ENCODE measurements at regions of chr15 and their contacts with region 1.

Region 1: DNA sequence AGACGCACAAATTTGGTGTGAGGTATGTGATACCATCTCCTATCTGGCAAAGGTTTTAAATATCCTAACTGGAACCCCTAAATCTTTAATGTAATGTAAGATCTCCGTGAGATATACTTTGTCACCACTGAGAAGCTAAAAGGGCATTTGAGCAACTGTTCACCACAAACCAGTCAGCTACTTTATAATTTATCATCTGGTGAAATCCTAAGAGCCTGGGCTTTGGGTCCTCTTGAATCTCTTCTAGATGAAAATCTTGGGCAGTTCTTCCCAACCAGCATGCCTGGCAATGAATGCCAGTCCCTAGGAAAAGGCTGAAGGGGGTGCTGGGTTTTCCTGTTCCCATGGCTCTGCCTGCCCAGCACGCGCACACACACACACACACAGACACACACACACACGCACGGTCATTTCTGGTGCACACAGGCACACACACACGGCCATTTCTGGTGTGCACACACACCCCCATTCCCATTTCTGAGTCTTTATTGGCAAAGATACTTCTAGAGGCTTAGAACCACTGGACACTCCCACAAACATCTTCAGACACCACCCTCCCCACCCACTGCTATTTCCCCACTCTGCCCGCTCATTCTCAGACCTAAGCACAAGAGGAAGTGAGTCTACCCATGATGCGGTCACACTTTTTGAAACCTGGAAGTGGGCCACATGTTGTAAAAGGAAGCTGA is 72.6 kb downstream of the MYO1E start:
- DNase-seq: peak; percentile 97
- ATAC-seq: peak; percentile 77
- H3K4me3 ChIP-seq: peak overlapping the region; percentile 8; the same call in 1 of the 2 replicates
- H3K27ac ChIP-seq: peak overlapping the region; percentile 96
- H3K4me1 ChIP-seq: peaks cover 82% of the 10 kb centered on the region
- H3K27me3 ChIP-seq: no peaks in the 10 kb centered on the region
- CTCF ChIP-seq: no peak
- EP300 ChIP-seq: peak; percentile 62 to 87; a peak in 3 of 4 replicates
- POLR2A ChIP-seq: no peak
- RAD21 ChIP-seq: 0 out of 2 replicates have a peak, but pooled peaks have one; percentile 16

Region 2: DNA sequence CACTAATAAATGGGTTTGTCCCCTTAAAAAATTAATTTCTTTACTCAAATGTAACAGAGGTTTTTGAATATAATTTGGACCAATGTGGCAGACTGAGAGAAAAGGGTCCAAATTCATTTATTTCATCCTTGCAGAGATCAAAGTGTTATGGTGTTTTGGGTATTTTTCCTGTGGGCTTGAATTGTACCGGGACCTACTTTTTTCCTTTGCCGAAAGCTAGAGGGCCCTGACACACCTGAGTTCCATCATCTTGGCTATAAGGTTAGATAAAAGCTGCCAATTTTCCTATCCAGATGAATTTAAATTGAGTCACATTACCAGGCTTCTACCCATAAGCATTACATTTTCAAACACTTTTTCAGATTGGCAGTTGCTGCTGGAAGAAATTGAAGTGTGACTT is 194.2 kb before region 1 on chr15:
- CTCF ChIA-PET with region 1: no interaction called
- POLR2A ChIA-PET with region 1: no interaction called
- RAD21 ChIA-PET with region 1: no interaction called
- SMC1A ChIA-PET with region 1: no interaction called
- in situ Hi-C with region 1: no loop called
- intact Hi-C with region 1: no loop called
- DNase-seq: no peak
- ATAC-seq: no peak
- H3K4me3 ChIP-seq: peak overlapping the region; percentile 95
- H3K27ac ChIP-seq: peak overlapping the region; percentile 86; the same call in 1 of the 2 replicates
- H3K4me1 ChIP-seq: peaks cover 4% of the 10 kb centered on the region; the same call in 1 of the 2 replicates
- H3K27me3 ChIP-seq: no peaks in the 10 kb centered on the region
- CTCF ChIP-seq: peak in 2 of 3 experiments; percentile 12 to 46; a peak in 2 of 6 replicates
- EP300 ChIP-seq: no peak
- POLR2A ChIP-seq: no peak
- RAD21 ChIP-seq: peak; percentile 31; the same call in 1 of the 2 replicates

Region 3: GRCh38 chr15:59237119-59237855 is 62.8 kb before region 1 on chr15:
- CTCF ChIA-PET with region 1: interaction called, 5 read pairs
- POLR2A ChIA-PET with region 1: interaction called, 10 read pairs
- RAD21 ChIA-PET with region 1: interaction called, 17 read pairs
- SMC1A ChIA-PET with region 1: interaction called, 11 read pairs
- in situ Hi-C with region 1: no loop called
- intact Hi-C with region 1: no loop called
- DNase-seq: peak; percentile 70
- ATAC-seq: peak; percentile 89
- H3K4me3 ChIP-seq: peak overlapping the region; percentile 35
- H3K27ac ChIP-seq: peak overlapping the region; percentile 78
- H3K4me1 ChIP-seq: peaks cover 11% of the 10 kb centered on the region
- H3K27me3 ChIP-seq: no peaks in the 10 kb centered on the region
- CTCF ChIP-seq: no peak
- EP300 ChIP-seq: peak; percentile 52 to 87; a peak in 2 of 4 replicates
- POLR2A ChIP-seq: no peak
- RAD21 ChIP-seq: no peak

Region 4: GRCh38 chr15:59313641-59314332 is 13.7 kb after region 1 on chr15:
- CTCF ChIA-PET with region 1: interaction called, 15 read pairs
- POLR2A ChIA-PET with region 1: interaction called, 17 read pairs
- RAD21 ChIA-PET with region 1: interaction called, 44 read pairs
- SMC1A ChIA-PET with region 1: interaction called, 18 read pairs
- in situ Hi-C with region 1: no loop called
- intact Hi-C with region 1: no loop called
- DNase-seq: peak; percentile 81
- ATAC-seq: peak; percentile 96
- H3K4me3 ChIP-seq: no peak overlapping the region; the same call in 1 of the 2 replicates
- H3K27ac ChIP-seq: peak overlapping the region; percentile 81
- H3K4me1 ChIP-seq: peaks cover 67% of the 10 kb centered on the region
- H3K27me3 ChIP-seq: no peaks in the 10 kb centered on the region
- CTCF ChIP-seq: no peak
- EP300 ChIP-seq: peak; percentile 70 to 79; a peak in 2 of 4 replicates
- POLR2A ChIP-seq: 0 out of 2 replicates have a peak, but pooled peaks have one; percentile 31
- RAD21 ChIP-seq: no peak

Region 5: GRCh38 chr15:59372352-59373211 is 72.5 kb after region 1 on chr15 and contains the start of gene MYO1E:
- CTCF ChIA-PET with region 1: no interaction called
- POLR2A ChIA-PET with region 1: interaction called, 3 read pairs
- RAD21 ChIA-PET with region 1: interaction called, 9 read pairs
- SMC1A ChIA-PET with region 1: interaction called, 6 read pairs
- in situ Hi-C with region 1: no loop called
- intact Hi-C with region 1: loop called (anchors 2 kb)
- DNase-seq: peak; percentile 72
- ATAC-seq: peak; percentile 76
- H3K4me3 ChIP-seq: peak within 1 kb of the TSS; percentile 75
- H3K27ac ChIP-seq: peak within 1 kb of the TSS; percentile 95
- H3K4me1 ChIP-seq: peaks cover 3% of the 10 kb centered on the region
- H3K27me3 ChIP-seq: no peaks in the 10 kb centered on the region
- CTCF ChIP-seq: no peak
- EP300 ChIP-seq: no peak
- POLR2A ChIP-seq: peak; percentile 88
- RAD21 ChIP-seq: no peak
- polyA plus RNA-seq, gene MYO1E: 10.3 to 27.5 TPM

Region 6: GRCh38 chr15:59484399-59484798 is 184.3 kb after region 1 on chr15:
- CTCF ChIA-PET with region 1: no interaction called
- POLR2A ChIA-PET with region 1: no interaction called
- RAD21 ChIA-PET with region 1: interaction called, 5 read pairs
- SMC1A ChIA-PET with region 1: interaction called, 12 read pairs
- in situ Hi-C with region 1: loop called (anchors 5 kb)
- intact Hi-C with region 1: loop called (anchors 5 kb)
- DNase-seq: no peak
- ATAC-seq: no peak
- H3K4me3 ChIP-seq: no peak overlapping the region
- H3K27ac ChIP-seq: no peak overlapping the region
- H3K4me1 ChIP-seq: peaks cover 15% of the 10 kb centered on the region
- H3K27me3 ChIP-seq: no peaks in the 10 kb centered on the region
- CTCF ChIP-seq: no peak
- EP300 ChIP-seq: no peak
- POLR2A ChIP-seq: no peak
- RAD21 ChIP-seq: no peak